ENCODE measurements at regions of chr16 and their contacts with region 1.

Region 1: DNA sequence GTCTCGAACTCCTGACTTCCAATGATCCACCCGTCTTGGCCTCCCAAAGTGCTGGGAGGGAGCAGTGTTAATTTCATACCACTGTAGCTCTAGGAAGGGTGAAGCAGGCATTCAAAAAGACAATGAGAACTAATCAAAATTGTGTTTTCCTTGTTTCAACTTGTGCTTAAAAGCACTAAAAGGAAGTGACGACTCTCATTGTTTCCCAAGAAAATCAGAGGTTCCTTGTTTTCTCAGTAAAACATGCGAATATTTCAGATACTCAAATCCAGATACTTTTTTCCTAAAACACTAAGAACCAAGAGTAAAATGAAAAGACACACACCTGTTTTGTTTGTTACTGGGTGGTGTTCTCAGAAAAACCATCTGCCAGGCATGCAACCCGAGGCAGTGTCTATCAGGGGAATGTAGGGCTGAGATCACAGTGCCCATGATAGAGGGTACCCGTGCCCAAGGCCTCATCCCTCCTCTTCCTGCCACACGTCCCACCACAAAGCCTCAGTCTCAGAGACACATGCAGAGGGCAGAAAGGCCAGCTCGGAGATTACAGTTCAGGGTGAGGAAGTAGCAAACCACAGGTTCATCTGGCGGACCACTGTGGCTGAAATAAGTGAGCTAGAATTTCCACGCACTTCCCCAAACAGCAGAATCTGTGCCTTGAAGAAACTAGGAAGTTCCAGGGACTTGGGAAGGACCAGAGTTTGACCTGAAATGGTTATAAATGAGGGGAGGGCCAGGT is 33.7 kb downstream of the GINS3 start:
- DNase-seq: peak in 25 of 42 donors; percentile 25 to 74 (median 50)

Region 2: DNA sequence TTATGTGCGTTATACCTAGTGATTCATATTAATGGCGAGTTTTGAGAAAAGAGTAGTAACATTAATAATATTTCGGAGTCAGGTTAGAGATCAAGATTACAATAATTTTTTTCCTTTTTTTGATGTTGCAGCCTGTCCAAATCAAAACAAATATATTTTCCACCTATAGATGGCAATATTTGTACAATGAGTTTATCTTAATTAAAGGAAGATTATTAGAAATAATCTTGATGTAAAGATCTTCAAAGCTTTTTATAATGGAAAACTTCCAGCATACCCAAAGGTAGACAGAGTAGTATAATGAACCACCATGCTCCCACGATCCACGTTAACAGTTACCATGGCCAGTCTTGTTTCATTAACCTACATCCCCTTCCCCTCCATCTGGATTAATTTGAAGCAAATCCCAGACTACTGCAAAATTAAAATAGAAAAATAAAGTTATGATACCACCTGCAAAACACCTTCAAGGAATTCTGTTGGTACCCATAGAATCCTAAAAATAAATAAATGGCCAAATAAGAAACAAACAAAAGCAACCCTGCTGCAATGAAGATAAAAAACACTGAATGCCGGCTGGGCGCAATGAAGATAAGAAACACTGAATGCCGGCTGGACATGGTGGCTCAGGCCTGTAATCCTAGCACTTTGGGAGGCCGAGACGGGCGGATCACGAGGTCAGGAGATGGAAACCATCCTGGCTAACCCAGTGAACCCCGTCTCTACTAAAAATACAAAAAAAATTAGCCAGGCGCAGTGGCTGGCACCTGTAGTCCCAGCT is 80.2 kb before region 1 on chr16:
- intact Hi-C with region 1: loop called (anchors 10 kb)
- DNase-seq: no peak

Region 3: GRCh38 chr16:58889516-58889915 is 463.6 kb after region 1 on chr16:
- intact Hi-C with region 1: no loop called
- DNase-seq: no peak